Activated CD4-positive, alpha-beta memory T cell treated with anti-CD3 and anti-CD28 coated beads for 36 hours (primary cell): ENCODE measurements at regions of chr11 and their contacts with region 1.

Region 1: GRCh38 chr11:17730608-17731462 is 3.7 kb upstream of the KCNC1 start:
- DNase-seq: peak; percentile 80
- H3K4me3 Mint-ChIP-seq: no peak overlapping the region
- H3K27ac Mint-ChIP-seq: no peak overlapping the region
- H3K4me1 Mint-ChIP-seq: peaks cover 5% of the 10 kb centered on the region
- H3K27me3 Mint-ChIP-seq: peaks cover 39% of the 10 kb centered on the region

Region 2: GRCh38 chr11:17479284-17480214 is 251.3 kb before region 1 on chr11:
- CTCF ChIA-PET with region 1: no interaction called
- POLR2A ChIA-PET with region 1: no interaction called
- intact Hi-C with region 1: no loop called
- DNase-seq: no peak
- H3K4me3 Mint-ChIP-seq: no peak overlapping the region
- H3K27ac Mint-ChIP-seq: no peak overlapping the region
- H3K4me1 Mint-ChIP-seq: peaks cover 6% of the 10 kb centered on the region
- H3K27me3 Mint-ChIP-seq: peaks cover 35% of the 10 kb centered on the region

Region 3: DNA sequence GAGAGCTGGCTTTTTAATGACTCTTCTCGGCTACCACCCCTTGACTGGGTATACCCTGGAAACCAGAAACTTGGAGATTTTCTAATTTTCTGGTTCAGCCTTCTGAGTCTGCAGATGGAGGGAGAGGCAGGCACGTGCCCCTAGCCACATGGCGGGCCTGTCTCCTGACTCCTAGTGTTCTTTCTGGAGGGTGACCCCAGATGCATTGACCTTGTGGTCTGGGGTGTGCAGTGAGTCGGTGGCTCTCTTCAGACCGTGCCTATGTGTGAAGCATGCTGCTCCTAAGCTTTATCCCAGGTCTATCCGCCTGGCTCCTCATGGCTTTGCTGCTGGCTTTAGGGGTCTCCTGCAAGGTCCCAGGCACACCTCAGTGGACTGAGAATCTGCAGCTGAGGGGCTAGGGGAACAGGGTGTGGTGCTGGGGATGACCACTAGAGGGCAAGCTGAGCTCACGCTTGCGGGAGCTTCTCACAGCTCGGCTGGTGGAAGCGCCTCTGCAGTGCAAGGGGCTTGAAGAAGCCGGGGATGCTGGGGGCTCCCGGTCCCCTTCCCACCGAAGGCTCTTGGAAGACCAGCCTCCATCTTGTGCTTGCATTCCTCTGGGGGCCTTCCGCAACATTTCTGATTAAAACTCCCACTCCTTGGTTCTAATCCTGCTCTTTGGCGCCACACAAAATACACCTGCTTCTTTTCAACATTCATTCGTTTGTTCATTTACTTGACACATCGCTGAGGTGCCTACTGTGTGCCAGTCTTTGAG is 132.0 kb before region 1 on chr11:
- CTCF ChIA-PET with region 1: interaction called, 23 read pairs
- POLR2A ChIA-PET with region 1: no interaction called
- intact Hi-C with region 1: loop called (anchors 1 kb)
- DNase-seq: peak; percentile 80
- H3K4me3 Mint-ChIP-seq: no peak overlapping the region
- H3K27ac Mint-ChIP-seq: no peak overlapping the region
- H3K4me1 Mint-ChIP-seq: peaks cover 10% of the 10 kb centered on the region
- H3K27me3 Mint-ChIP-seq: peaks cover 3% of the 10 kb centered on the region

Region 4: DNA sequence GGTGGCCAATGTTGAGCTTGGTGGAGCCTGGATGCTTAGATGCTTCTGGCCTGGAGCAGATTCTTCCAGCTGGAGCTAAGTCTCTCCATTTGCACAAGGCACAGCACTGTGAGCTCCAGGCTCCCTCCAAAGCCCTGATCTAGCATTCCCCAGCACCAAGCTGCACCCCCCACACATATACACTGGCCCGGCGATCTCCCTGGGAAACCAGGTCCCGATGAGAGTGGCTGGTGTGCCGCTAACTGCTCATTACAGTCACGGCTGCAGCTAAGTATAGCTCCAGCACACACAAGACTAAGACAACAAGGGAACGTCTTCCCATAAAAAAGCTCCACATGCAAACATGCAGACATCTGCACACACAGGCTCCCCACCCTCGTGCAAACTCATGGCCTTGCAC is 21.3 kb after region 1 on chr11:
- CTCF ChIA-PET with region 1: interaction called, 10 read pairs
- POLR2A ChIA-PET with region 1: no interaction called
- intact Hi-C with region 1: no loop called
- DNase-seq: no peak
- H3K4me3 Mint-ChIP-seq: no peak overlapping the region
- H3K27ac Mint-ChIP-seq: no peak overlapping the region
- H3K4me1 Mint-ChIP-seq: no peaks in the 10 kb centered on the region
- H3K27me3 Mint-ChIP-seq: peaks cover 10% of the 10 kb centered on the region

Region 5: DNA sequence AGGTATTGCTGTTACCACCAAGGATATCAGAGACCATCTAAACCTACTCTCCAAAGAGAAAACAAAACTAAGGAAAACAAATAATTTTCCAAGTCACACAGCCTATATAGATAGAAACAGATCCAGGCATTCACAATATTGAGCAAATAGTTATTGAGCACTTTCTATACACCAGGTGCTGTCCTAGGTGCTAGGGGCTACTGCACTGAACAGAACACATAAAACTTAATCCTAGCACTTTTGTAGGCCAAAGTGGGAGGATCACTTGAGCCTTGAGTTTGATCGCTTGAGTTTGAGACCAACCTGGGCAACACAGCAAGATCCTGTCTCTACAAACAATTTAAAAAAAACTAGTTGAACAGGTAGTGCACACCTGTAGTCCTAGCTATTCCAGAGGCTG is 237.4 kb after region 1 on chr11:
- CTCF ChIA-PET with region 1: interaction called, 13 read pairs
- POLR2A ChIA-PET with region 1: no interaction called
- intact Hi-C with region 1: no loop called
- DNase-seq: no peak
- H3K4me3 Mint-ChIP-seq: no peak overlapping the region
- H3K27ac Mint-ChIP-seq: no peak overlapping the region
- H3K4me1 Mint-ChIP-seq: no peaks in the 10 kb centered on the region
- H3K27me3 Mint-ChIP-seq: no peaks in the 10 kb centered on the region